ENCODE measurements at regions of chr17 and their contacts with region 1.

Region 1: DNA sequence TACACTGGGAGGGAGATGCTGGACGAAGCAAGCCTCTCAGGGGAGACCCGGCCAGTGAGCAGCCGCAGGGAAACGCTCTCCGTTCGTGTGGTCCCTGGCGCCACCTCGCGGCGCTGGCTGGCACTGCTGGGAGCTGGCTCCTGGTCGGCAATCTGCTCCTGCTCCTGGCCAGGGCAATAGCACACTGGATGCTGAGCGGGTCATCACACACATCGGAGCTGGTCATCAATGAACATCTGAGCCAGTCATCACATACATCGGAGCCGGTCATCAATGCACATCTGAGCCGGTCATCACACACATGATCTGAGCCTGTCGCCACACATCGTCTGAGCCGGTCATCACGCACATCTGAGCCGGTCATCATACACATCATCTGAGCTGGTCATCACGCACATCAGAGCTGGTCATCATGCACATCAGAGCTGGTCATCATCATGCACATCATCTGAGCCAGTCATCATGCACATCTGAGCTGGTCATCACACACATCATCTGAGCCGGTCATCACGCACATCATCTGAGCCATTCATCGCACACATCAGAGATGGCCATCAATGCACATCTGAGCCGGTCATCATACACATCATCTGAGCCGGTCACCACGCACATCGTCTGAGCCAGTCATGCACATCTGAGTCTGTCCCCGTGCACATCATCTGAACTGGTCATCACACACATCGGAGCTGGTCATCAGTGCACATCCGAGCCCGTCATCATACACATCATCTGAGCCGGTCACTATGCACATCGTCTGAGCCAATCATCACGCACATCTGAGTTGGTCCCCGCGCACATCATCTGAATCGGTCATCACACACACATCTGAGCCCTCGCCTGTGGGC is 217.3 kb downstream of the RBFOX3 start:
- DNase-seq: no peak
- H3K4me3 ChIP-seq: no peak overlapping the region
- H3K27ac ChIP-seq: no peak overlapping the region
- H3K4me1 ChIP-seq: peaks cover 0 to 2% (median under 1%) of the 10 kb centered on the region in 4 donors
- H3K27me3 ChIP-seq: peaks cover 0 to 4% (median 0%) of the 10 kb centered on the region in 3 donors
- CTCF ChIP-seq: peak; percentile 48 to 85 (median 73)
- EP300 ChIP-seq: no peak
- POLR2A ChIP-seq: no peak

Region 2: DNA sequence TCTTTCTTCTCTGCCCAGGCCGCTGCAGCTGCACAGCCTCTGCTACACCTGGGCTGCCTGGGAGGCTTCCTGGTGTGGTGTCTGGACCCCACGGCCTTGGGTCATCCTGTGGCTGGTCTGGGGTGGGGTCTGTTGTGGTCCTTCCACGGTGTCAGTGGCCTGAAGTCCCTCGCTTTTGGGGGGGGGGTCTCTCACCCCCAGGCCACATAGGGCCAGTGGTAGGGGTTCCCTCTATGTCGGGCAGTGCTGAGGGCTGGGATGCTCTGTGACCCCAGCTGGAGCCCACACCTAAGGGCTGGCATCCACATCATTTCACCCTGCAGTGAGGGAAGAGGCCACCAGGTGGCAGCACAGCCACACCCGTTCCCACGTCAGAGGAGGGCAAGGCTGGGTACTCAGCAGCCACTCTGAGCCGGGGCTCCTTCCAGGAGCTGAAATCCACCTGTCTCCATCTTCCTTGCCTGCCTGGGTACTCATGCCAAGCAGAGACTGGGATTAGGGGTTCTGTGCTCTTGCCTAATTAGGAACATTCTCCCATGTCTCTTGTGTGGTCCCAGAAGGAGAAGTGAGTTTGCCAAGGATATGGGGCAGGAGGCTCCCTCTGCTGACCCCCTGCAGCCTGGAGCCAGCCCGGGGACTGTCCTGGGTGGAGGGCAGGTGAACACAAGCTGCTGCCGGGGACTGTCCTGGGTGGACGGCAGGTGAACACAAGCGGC is 306.0 kb before region 1 on chr17:
- intact Hi-C with region 1: loop called (anchors 1 kb)
- DNase-seq: peak; percentile 88
- H3K4me3 ChIP-seq: no peak overlapping the region
- H3K27ac ChIP-seq: no peak overlapping the region
- H3K4me1 ChIP-seq: peaks cover 0 to 15% (median 4%) of the 10 kb centered on the region in 4 donors
- H3K27me3 ChIP-seq: no peaks in the 10 kb centered on the region
- CTCF ChIP-seq: peak; percentile 74 to 92 (median 87)
- EP300 ChIP-seq: no peak
- POLR2A ChIP-seq: no peak

Region 3: GRCh38 chr17:79563237-79564013 is 169.8 kb after region 1 on chr17:
- intact Hi-C with region 1: no loop called
- DNase-seq: peak; percentile 19
- H3K4me3 ChIP-seq: no peak overlapping the region
- H3K27ac ChIP-seq: no peak overlapping the region
- H3K4me1 ChIP-seq: peaks cover 0 to 23% (median 5%) of the 10 kb centered on the region in 4 donors
- H3K27me3 ChIP-seq: no peaks in the 10 kb centered on the region
- CTCF ChIP-seq: no peak
- EP300 ChIP-seq: no peak
- POLR2A ChIP-seq: no peak

Region 4: DNA sequence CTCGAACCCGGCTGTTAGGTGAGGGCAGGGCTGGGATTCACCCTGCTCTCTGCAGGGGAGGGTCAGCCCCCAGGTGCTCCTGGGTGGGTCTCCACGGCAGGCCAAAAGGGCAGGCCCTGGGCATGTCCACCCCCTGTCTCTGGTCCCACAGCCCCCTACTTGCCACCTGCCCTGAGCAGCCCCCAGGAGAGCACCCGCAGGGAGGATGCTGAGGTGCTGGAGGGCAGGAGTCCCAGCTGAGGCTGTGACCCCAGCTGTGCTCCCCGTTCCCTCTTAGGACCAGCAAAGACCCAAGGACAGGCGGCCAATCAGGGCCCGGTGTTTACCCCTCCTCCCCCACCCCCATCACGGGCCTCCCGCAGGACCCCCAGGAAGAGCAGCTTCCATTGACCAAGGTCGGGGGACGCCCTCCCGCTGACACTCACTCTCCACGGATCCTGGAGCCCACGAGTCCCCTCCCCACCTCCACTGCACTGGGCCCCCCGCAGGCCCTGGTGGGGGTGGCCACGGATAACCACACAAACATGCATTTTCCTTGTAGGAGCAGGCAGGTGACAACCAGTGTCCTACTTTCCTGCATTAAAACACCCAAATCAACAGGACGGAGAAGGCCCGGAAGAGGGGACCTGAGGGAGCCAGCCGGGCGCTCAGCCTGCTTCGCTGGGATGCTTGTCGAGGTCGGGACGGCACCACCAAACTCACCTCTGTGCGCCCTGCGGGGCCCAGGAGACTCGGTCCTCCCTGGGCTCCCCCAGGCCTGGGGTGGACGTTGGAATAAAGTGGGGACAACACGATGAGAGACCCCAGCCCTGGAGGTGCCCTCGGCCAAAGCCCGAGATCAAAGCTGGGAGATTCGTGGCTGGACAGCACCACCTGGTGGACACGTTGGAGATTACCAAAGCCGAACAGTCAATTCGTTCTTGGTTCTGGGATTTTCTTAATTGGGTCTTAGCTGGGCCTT is 314.6 kb after region 1 on chr17:
- intact Hi-C with region 1: loop called (anchors 5 kb)
- DNase-seq: no peak
- H3K4me3 ChIP-seq: peak overlapping the region in 3 of 4 donors; percentile 12 to 29 (median 26)
- H3K27ac ChIP-seq: peak overlapping the region in 3 of 4 donors; percentile 68 to 83 (median 79)
- H3K4me1 ChIP-seq: peaks cover 0 to 31% (median 25%) of the 10 kb centered on the region in 4 donors
- H3K27me3 ChIP-seq: no peaks in the 10 kb centered on the region
- CTCF ChIP-seq: peak; percentile 62 to 81 (median 77)
- EP300 ChIP-seq: no peak
- POLR2A ChIP-seq: no peak